Aorta (tissue), 5 donors: ENCODE measurements at regions of chr14 and their contacts with region 1.

Region 1: DNA sequence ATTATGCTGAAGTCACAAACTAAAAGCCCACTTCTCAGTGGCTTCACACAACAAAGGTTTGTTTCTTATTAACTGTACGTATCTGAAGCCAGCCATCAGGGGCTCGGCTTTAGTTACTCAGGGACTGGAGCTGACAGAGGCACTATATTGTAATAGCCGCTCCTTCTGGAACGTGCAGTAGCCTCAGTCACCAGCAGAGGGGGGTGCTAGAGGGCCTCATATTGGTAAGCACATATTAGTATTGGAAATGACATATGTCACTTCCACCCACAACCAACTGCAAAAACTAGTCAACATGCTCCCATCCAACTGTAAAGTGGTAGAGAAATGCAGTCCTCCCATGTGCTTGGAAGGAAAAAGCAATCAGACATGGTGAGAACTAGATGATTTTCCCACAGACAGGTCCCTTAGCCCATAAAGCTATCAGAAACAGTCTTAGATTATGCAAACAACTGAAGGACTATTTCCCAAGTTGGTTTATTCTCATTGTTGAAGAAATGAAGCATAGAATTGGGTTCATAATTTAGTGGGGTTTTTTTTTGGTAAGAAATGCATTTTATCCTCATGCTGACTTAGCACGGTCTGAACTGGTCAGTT is 183.6 kb upstream of the G2E3 start:
- DNase-seq: peak in 1 of 2 donors; percentile 60
- ATAC-seq: peak; percentile 73
- H3K4me3 ChIP-seq: no peak overlapping the region
- H3K27ac ChIP-seq: no peak overlapping the region
- H3K4me1 ChIP-seq: no peaks in the 10 kb centered on the region
- H3K27me3 ChIP-seq: peaks cover 0 to 2% of the 10 kb centered on the region in 2 donors

Region 2: GRCh38 chr14:30443368-30444007 is 68.1 kb after region 1 on chr14:
- intact Hi-C with region 1: loop called in 1 of 2 experiments (anchors 5 kb)
- DNase-seq: no peak
- ATAC-seq: no peak
- H3K4me3 ChIP-seq: no peak overlapping the region
- H3K27ac ChIP-seq: no peak overlapping the region
- H3K4me1 ChIP-seq: no peaks in the 10 kb centered on the region
- H3K27me3 ChIP-seq: peaks cover 0 to 2% of the 10 kb centered on the region in 2 donors

Region 3: DNA sequence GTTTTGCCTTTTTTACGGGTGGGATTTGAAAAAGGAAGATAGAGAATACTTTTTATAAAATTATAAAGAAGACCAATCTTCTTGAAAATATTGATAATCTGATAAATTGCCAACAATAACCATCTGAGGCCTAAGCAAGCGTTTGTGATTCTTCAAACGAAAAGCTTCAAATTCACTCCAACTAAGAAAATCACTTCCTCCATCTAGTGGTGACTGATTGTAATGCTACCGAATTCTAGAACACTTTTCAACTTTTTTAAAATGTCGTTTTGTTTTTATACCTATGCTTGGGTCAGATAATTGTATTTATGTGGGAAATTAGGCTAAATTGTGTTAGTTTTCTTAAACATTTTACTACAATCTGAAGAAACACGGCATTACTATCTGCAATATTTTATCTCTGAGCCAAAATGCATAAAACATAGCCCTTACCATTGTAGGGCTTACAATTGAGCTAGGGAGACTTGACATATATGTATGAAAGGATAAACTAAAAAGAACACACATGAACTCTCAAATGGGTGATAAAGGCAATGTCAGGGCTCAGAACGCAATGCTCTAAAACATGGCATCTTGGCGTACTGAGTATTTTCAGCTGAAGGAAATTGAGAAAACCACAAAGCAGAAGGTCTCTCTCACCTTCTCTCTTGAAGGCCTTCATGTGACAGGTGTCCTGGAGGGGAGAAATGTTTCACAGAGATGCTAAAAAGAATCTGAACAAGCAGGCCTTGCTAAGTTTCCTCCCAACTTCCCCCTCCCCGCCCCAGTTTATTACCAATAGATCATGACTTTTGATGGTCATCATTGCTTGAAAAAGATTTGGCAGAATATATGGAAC is 146.7 kb after region 1 on chr14:
- intact Hi-C with region 1: loop called in 1 of 2 experiments (anchors 5 kb)
- DNase-seq: no peak
- ATAC-seq: no peak
- H3K4me3 ChIP-seq: no peak overlapping the region
- H3K27ac ChIP-seq: no peak overlapping the region
- H3K4me1 ChIP-seq: no peaks in the 10 kb centered on the region
- H3K27me3 ChIP-seq: no peaks in the 10 kb centered on the region